ENCODE measurements at regions of chr16 and their contacts with region 1.

Region 1: GRCh38 chr16:4586291-4586690 is 28.4 kb downstream of the UBALD1 start:
- DNase-seq: no peak
- ATAC-seq: no peak

Region 2: DNA sequence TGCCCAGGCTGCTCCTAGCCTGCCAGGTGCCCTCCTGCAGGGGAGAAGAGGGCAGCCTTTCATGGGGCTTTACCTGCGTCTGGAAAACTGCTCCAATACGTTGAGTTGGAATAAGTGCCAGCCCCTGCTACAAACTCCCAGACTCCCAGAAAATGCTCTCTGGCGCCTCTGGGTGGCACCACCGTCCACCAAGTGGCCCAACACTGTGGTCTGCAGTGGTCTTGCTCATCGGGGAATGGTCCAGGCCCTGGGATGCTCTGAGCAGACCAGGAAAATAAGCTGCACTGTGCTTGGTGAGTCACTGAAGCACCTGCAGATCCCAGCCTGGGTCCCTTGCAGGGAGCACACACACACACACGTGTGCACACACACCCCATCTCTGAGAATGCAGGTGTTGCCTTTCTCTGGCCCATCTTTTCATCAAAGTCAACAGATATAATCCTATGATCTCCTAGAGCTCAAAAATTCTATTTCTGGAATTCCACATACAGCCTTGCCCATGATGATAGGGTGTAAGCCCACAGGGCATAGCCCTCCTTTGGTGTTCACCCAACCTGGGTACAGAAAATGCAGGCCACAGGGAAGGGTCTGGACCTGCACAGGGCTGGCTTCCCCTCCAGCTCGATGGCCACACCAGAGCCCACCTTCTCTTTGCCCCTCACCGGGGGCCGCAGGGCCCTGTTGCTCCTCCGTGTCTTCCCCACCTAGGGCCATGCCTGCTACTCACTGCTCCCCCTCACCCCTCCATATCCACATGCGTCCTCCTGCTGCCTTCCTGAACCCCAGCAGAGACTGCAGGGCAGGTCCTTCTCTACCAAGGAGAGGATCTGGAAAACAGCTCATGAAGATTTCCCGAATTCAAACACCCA is 68.2 kb before region 1 on chr16:
- intact Hi-C with region 1: loop called (anchors 5 kb)
- DNase-seq: no peak
- ATAC-seq: peak; percentile 21

Region 3: GRCh38 chr16:4561596-4561995 is 24.7 kb before region 1 on chr16:
- intact Hi-C with region 1: no loop called
- DNase-seq: no peak
- ATAC-seq: no peak

Region 4: GRCh38 chr16:4616047-4616811 is 29.9 kb after region 1 on chr16:
- intact Hi-C with region 1: no loop called
- DNase-seq: peak; percentile 100
- ATAC-seq: peak; percentile 92